HEK293 (cell line): ENCODE measurements at regions of chr7 and their contacts with region 1.

Region 1: GRCh38 chr7:121547544-121548092 is 151.5 kb upstream of the FAM3C start:
- H3K4me3 ChIP-seq: no peak overlapping the region
- H3K27ac ChIP-seq: no peak overlapping the region
- H3K4me1 ChIP-seq: peaks cover 5% of the 10 kb centered on the region; the same call in 1 of the 2 replicates
- CTCF ChIP-seq: peak; percentile 47; the same call in 1 of the 2 replicates

Region 2: DNA sequence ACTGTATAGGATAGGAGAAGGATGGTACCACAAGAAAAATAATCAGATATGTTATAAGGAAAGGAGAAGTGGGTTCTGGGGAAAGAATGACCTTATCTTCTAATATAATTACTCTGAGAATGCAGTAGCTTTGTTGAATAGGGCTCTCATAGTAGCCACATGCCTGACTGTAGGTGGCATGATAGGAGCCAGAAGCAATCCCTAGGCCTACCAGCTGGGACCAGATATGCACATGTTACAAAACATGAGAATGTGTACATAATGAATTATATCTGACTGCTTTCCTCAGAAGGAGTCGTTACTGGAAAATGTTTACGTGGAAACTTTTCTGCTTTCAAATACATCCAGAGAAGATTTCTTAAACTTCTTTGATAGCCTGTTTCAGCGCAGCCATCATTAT is 98.3 kb before region 1 on chr7:
- CTCF ChIA-PET with region 1: no interaction called
- POLR2A ChIA-PET with region 1: no interaction called
- H3K4me3 ChIP-seq: no peak overlapping the region
- H3K27ac ChIP-seq: no peak overlapping the region
- H3K4me1 ChIP-seq: no peaks in the 10 kb centered on the region
- CTCF ChIP-seq: no peak

Region 3: DNA sequence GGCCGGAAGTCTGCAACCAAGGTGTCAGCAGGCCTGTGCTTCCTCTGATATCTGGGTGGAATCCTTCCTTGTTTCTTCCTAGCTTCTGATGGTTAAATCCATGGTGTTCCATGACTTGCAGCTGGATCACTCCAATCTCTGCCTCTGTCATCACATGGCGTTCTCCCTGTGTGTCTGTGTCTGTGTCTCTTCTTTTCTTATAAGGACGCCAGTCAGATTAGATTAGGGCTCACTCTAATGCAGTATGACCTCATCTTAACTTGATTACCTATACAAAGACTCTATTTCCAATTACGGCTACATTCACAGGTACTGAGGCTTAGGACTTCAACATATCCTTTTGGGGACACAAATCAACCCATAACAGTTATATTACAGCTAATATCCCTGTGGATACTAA is 81.2 kb before region 1 on chr7:
- CTCF ChIA-PET with region 1: no interaction called
- POLR2A ChIA-PET with region 1: interaction called, 16 read pairs
- H3K4me3 ChIP-seq: no peak overlapping the region
- H3K27ac ChIP-seq: no peak overlapping the region
- H3K4me1 ChIP-seq: no peaks in the 10 kb centered on the region
- CTCF ChIP-seq: no peak